Activated naive CD4-positive, alpha-beta T cell treated with anti-CD3 and anti-CD28 coated beads, Interleukin-2, amount 10 ng/mL, durations not matched to agents 7 days and 5 days (primary cell): ENCODE measurements at regions of chr14 and their contacts with region 1.

Region 1: GRCh38 chr14:23068476-23069412 is 11.4 kb upstream of the CDH24 start:
- DNase-seq: peak; percentile 86
- H3K4me3 Mint-ChIP-seq: peak overlapping the region; percentile 34
- H3K27ac Mint-ChIP-seq: peak overlapping the region; percentile 75
- H3K4me1 Mint-ChIP-seq: peaks cover 39% of the 10 kb centered on the region
- H3K27me3 Mint-ChIP-seq: no peaks in the 10 kb centered on the region

Region 2: GRCh38 chr14:22886500-22887259 is 182.1 kb before region 1 on chr14:
- CTCF ChIA-PET with region 1: no interaction called
- DNase-seq: peak; percentile 86
- H3K4me3 Mint-ChIP-seq: peak overlapping the region; percentile 87
- H3K27ac Mint-ChIP-seq: peak overlapping the region; percentile 95
- H3K4me1 Mint-ChIP-seq: peaks cover 53% of the 10 kb centered on the region
- H3K27me3 Mint-ChIP-seq: peaks cover 47% of the 10 kb centered on the region

Region 3: DNA sequence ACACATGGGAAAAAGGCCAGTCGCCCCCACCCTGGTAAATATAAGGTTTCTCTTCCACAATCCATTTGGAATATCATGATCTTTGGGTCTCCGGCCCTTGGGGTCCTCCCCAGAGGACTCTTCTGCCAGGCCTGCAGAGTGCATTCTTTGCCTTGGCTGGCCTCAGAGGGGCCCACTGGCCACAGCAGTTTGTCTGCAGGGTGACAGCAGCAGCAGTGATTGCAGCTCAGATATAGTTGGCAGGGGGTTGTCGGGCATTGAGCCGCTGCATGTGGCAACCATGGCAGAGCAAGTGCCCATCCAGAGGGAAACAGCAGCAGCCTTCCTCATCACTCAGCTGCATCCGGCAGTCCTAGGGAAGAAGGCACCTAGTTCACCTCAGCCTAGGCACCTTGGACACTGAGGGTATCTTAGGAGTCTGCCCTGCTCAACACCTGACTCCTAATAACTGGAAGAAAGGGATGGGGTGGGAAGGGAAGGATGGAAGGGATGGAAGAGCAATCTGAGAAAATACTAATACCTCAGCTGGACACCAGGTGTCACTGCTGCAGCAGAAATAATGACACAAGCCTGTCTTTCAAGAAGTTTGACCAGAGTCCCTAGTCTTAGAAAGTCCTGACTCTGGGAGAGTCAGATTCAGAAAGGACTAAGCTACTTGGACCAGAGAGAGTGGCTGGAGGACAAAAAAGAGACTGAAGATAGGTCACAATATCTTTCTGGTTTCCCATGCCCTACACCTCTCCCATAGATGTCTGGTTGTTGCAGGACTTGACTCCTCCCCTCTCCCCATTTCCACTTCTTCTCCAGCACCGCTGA is 95.3 kb before region 1 on chr14:
- CTCF ChIA-PET with region 1: interaction called, 16 read pairs
- DNase-seq: peak; percentile 60
- H3K4me3 Mint-ChIP-seq: no peak overlapping the region
- H3K27ac Mint-ChIP-seq: no peak overlapping the region
- H3K4me1 Mint-ChIP-seq: no peaks in the 10 kb centered on the region
- H3K27me3 Mint-ChIP-seq: peaks cover 12% of the 10 kb centered on the region

Region 4: DNA sequence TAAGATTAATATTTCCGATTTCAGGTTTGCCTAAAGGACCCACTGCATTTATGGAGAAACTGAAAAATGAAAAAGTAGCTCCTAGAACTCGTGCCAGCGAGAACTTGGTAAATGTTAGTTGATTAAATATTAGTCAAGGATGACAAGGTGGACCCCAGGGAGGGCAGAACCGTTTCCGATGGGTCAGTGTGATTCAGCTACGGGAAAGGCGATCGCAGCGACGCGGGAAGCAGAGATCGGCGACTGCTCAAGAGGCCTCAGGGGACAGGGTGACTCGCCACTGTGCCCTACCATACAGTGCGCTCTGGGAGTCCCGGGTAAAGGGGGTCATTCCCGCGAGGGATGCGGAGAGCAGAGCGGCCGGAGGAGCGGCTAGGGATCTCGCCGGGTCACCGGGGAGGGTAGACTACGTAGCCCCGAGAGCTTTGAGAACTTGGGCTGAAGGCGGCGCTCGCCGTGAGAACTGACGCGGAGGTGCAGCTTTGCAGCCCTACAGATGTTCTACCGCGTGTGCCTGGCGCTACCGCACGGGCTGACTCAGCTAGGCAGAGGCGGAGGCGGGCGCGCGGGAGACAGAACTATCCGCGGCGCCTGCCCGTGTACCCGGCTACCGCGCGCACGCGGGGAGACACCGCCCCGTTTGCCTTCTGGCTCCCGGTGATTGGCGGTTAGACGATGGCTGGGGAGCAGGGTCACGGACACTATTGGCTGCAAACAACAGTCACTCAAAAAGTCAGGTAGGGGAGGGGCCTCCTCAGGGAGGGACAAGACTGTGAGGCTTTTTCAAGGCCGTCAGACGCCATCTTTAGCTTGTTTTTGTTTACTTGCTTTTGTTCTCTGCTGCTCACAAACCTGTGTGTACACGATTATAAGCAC is 62.0 kb before region 1 on chr14:
- CTCF ChIA-PET with region 1: interaction called, 12 read pairs
- DNase-seq: peak; percentile 98
- H3K4me3 Mint-ChIP-seq: peak overlapping the region; percentile 96
- H3K27ac Mint-ChIP-seq: peak overlapping the region; percentile 98
- H3K4me1 Mint-ChIP-seq: peaks cover 53% of the 10 kb centered on the region
- H3K27me3 Mint-ChIP-seq: no peaks in the 10 kb centered on the region

Region 5: GRCh38 chr14:23089498-23090253 is 20.9 kb after region 1 on chr14:
- CTCF ChIA-PET with region 1: interaction called, 25 read pairs
- DNase-seq: no peak
- H3K4me3 Mint-ChIP-seq: no peak overlapping the region
- H3K27ac Mint-ChIP-seq: no peak overlapping the region
- H3K4me1 Mint-ChIP-seq: peaks cover 19% of the 10 kb centered on the region
- H3K27me3 Mint-ChIP-seq: no peaks in the 10 kb centered on the region

Region 6: DNA sequence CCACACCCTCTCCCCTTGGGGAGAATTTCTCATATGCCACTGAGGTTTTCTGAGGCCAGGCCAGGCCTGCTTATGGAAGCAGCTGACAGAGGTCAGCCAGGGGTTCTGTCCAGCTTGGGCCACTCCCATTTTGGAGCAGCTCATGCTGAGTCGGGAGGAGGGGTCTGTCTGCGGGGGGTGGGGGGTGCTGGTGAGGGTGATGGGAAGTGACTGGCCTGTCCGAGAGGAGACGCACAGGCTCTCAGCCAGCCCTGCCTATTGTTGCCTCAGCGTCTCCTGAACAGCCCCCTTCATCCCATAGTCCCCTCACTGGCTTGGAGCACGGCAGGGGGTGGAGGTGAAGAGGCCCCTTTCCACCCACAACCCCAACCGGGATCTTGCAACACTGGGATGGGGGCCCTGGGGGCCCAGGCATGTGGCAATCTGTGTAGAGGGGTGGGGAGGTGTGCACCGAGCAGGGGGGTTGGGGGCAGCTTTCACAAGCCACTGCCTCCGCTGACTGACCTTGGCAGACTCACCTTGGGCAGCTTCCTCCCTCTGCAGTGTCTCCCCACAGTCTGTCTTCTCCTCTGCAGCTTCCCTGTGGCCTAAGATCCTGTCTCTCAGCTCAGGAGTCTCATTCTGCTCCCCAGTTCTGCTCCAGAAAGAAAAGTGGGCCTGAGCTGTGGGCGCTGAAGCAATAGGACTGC is 44.8 kb after region 1 on chr14:
- CTCF ChIA-PET with region 1: interaction called, 22 read pairs
- DNase-seq: no peak
- H3K4me3 Mint-ChIP-seq: no peak overlapping the region
- H3K27ac Mint-ChIP-seq: no peak overlapping the region
- H3K4me1 Mint-ChIP-seq: peaks cover 16% of the 10 kb centered on the region
- H3K27me3 Mint-ChIP-seq: peaks cover 27% of the 10 kb centered on the region

Region 7: GRCh38 chr14:23174276-23175184 is 105.8 kb after region 1 on chr14:
- CTCF ChIA-PET with region 1: interaction called, 10 read pairs
- DNase-seq: no peak
- H3K4me3 Mint-ChIP-seq: no peak overlapping the region
- H3K27ac Mint-ChIP-seq: no peak overlapping the region
- H3K4me1 Mint-ChIP-seq: peaks cover 16% of the 10 kb centered on the region
- H3K27me3 Mint-ChIP-seq: peaks cover 28% of the 10 kb centered on the region

Region 8: GRCh38 chr14:23294734-23295561 is 226.2 kb after region 1 on chr14:
- CTCF ChIA-PET with region 1: interaction called, 12 read pairs
- DNase-seq: peak; percentile 65
- H3K4me3 Mint-ChIP-seq: no peak overlapping the region
- H3K27ac Mint-ChIP-seq: peak overlapping the region; percentile 79
- H3K4me1 Mint-ChIP-seq: peaks cover 27% of the 10 kb centered on the region
- H3K27me3 Mint-ChIP-seq: peaks cover 5% of the 10 kb centered on the region